ENCODE measurements at regions of chr20 and their contacts with region 1.

Region 1: GRCh38 chr20:1466211-1467081 is at the start of gene NSFL1C:
- DNase-seq: peak; percentile 99
- ATAC-seq: peak; percentile 96
- H3K4me3 Mint-ChIP-seq: peak within 1 kb of the TSS; percentile 85
- H3K27ac Mint-ChIP-seq: peak within 1 kb of the TSS; percentile 85
- H3K4me1 Mint-ChIP-seq: peaks cover 42% of the 10 kb centered on the region
- H3K27me3 Mint-ChIP-seq: peaks cover 6% of the 10 kb centered on the region
- total RNA-seq, gene NSFL1C: 71.3 to 78.1 TPM

Region 2: DNA sequence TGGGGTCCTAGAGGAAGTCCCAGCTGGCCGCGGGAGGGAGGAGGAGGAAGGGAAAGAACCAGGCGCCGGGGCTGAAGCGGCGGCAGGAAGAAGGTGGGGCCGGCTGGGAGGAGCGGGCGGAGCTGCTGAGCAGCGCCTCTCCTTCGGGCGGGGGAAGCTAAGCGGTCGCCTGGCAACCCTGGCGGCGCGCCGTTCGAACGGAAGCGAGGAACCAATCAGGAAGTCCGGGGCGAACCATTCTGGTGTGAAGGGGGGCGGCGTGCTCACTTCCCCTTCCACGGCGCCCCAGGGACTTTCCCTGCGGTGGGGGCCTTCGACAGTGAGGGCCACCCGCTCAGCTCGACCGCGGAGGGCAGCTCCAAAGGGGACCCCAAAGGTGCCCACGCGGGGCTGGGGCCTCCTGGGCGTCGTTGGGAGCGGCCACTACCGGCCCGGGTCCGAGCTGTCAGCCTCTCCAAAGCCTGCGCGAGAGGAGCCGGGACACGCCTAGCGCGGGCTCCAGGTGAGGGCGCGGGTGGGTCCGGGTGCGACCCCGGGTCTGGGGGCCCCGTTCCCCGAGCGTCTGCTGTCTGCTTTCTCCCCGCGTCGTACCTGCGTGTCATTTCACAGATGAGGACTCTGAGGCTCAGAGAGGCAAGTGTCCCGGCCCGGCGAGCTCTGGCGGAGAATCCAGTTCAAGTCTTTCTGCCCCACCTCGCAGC is 632.8 kb before region 1 on chr20 and contains the start of gene FAM110A:
- CTCF ChIA-PET with region 1: no interaction called
- POLR2A ChIA-PET with region 1: no interaction called
- intact Hi-C with region 1: loop called in 1 of 2 experiments (anchors 1 kb)
- DNase-seq: peak; percentile 98
- ATAC-seq: peak; percentile 89
- H3K4me3 Mint-ChIP-seq: peak within 1 kb of the TSS; percentile 88
- H3K27ac Mint-ChIP-seq: peak within 1 kb of the TSS; percentile 86
- H3K4me1 Mint-ChIP-seq: peaks cover 38% of the 10 kb centered on the region
- H3K27me3 Mint-ChIP-seq: no peaks in the 10 kb centered on the region
- total RNA-seq, gene FAM110A: 15.5 TPM

Region 3: DNA sequence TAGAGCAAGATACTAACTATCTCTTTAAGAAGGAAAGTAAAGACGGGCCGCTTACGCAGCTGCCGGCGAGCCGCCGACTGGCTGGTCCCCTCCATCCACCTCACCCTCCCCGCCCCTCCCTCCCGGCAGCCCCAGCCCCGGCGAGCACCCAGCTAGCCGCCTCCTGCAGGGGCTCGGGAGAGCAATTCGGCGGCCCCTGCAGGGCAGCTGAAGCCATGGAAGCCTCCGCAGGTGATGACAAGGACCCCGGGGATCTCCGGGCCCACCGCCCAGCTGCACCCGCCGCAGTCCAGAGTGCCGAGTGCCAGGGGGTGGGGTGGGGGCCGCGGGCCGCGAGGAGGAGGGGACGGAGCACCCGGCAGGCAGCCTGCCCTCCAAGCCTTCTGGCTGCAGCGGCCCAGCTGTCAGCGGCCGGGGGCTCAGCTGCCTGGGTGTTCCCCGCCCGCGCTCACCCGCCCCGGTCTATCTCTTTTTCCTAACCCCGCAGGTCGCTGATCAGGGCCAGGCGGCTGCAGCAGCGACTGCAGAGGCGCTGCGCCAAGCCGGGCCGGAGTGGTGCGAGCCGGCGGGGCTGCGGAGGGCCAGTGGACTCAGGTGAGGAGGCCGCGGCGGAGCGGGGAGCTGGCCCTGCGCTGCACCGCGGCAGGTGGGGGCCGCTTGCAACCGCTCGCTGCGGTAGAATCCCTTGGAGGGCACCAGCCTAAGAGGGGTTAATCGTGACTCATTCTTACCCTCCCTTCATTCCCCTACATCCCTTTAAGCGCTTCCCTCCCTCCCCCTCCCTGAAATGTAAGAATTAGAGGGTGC is 200.1 kb before region 1 on chr20 and contains the start of gene SNPH:
- CTCF ChIA-PET with region 1: no interaction called
- POLR2A ChIA-PET with region 1: no interaction called
- intact Hi-C with region 1: loop called in 1 of 2 experiments (anchors 2 kb)
- DNase-seq: peak; percentile 86
- ATAC-seq: peak; percentile 91
- H3K4me3 Mint-ChIP-seq: peak within 1 kb of the TSS; percentile 78
- H3K27ac Mint-ChIP-seq: peak within 1 kb of the TSS; percentile 66
- H3K4me1 Mint-ChIP-seq: peaks cover 46% of the 10 kb centered on the region
- H3K27me3 Mint-ChIP-seq: no peaks in the 10 kb centered on the region
- total RNA-seq, gene SNPH: 2.5 to 2.9 TPM

Region 4: DNA sequence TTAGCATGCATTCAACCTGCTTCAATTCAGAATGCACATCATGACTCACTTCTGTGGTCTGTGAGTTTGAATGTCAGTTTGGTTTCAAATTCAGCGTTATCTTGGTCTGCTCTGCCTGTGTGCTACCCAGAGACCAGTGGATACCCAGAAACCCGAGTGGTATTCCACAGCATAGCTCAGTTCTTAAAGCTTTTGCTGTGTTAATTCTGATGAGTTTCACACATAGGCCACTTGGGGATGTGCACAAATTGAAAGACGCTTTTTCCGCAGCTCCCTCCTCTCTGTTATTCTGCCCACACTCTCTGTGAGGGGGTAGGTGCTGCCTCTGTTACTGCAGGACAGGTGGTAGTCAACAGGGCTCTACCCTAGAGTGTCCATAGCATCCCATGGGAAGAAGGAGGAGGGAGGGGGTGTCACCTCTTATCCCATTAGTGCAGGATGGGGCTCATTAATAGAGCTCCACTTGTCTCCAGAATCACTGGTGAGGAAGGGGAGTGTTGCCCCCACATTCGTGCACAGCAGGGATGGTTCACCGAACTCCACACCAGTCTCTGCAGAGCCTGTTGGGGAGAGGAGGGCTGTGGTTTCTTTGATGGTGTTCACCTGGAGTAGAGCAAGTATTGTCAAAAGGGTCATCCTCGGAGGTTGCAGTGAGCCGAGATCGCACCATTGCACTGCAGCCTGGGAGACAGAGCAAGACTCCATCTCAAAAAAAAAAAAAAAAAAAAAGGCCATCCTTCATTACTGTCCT is 108.3 kb before region 1 on chr20:
- CTCF ChIA-PET with region 1: no interaction called
- POLR2A ChIA-PET with region 1: no interaction called
- intact Hi-C with region 1: loop called in 1 of 2 experiments (anchors 1 kb)
- DNase-seq: peak; percentile 49
- ATAC-seq: peak; percentile 93
- H3K4me3 Mint-ChIP-seq: peak overlapping the region; percentile 54
- H3K27ac Mint-ChIP-seq: peak overlapping the region; percentile 70
- H3K4me1 Mint-ChIP-seq: peaks cover 56% of the 10 kb centered on the region
- H3K27me3 Mint-ChIP-seq: no peaks in the 10 kb centered on the region

Region 5: GRCh38 chr20:1503564-1504227 is 37.2 kb after region 1 on chr20:
- CTCF ChIA-PET with region 1: interaction called, 28 read pairs
- POLR2A ChIA-PET with region 1: no interaction called
- intact Hi-C with region 1: loop called in 1 of 2 experiments (anchors 1 kb)
- DNase-seq: peak; percentile 88
- ATAC-seq: peak; percentile 100
- H3K4me3 Mint-ChIP-seq: no peak overlapping the region
- H3K27ac Mint-ChIP-seq: no peak overlapping the region
- H3K4me1 Mint-ChIP-seq: peaks cover 6% of the 10 kb centered on the region
- H3K27me3 Mint-ChIP-seq: peaks cover 19% of the 10 kb centered on the region

Region 6: DNA sequence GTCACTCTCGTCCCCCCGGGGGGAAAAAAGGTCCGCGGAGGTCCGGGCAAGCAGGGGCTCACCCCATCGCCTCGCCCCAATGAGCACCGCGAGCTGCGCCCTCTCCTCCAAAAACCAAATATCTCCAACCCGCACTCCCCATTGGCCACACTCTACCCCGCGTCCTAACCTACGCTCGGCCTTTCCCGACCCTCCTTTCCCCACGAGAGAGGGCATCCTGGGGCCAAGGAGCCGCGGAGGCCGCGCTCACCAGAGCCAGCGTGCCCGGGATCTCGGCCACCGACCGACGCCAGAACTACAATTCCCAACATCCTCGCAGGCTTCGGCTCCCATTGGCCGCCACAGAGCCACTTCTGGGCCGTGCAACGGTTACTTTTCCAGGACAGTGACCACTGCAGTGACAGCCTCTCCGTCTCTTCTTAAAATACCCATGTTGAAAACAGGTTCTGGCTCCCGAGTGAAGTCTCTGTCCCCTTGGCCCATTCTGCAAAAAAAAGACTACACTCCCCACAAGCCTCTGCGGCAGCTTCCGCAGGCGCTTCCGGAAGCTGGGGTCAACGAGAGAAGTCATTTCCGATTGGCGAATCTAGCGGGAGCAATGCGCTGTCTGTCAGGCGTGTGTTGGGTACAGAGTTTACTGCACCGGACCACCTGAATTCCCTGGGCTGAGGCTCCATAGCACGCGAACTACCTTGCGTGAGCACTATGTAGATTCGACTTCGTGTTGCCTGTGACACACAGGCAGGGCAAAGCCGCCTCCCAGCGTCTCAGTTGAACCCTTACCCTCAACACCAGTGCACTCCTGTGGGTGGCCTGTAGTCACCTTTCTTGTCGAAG is 1042.4 kb after region 1 on chr20 and contains the start of gene ZNF343:
- CTCF ChIA-PET with region 1: no interaction called
- POLR2A ChIA-PET with region 1: no interaction called
- intact Hi-C with region 1: loop called in 1 of 2 experiments (anchors 1 kb)
- DNase-seq: peak; percentile 88
- ATAC-seq: peak; percentile 95
- H3K4me3 Mint-ChIP-seq: peak within 1 kb of the TSS; percentile 85
- H3K27ac Mint-ChIP-seq: peak within 1 kb of the TSS; percentile 95
- H3K4me1 Mint-ChIP-seq: peaks cover 8% of the 10 kb centered on the region
- H3K27me3 Mint-ChIP-seq: peaks cover 5% of the 10 kb centered on the region
- total RNA-seq, gene ZNF343: 9.9 to 12.3 TPM